Tibial artery (tissue), 4 donors: ENCODE measurements at regions of chr6 and their contacts with region 1.

Region 1: DNA sequence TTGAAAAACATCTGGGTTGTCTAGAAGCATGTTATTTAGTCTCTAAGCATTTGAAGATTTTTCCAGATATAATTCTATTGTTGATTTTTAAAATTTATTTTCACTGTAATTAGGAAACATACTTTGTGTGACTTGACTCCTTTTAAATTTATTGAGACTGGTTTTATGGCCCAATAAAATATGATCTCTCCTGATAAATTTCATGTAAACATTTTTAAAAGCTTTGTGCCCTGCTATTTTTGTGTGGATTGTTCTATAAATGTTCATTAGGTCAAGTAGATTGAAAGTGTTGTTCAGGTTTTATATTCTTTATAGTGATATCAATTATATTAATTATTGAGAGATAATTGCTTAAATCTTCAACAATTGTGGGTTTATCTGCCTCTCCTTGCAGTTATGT is 105.4 kb downstream of the RFX6 start:
- DNase-seq: no peak
- H3K4me3 ChIP-seq: no peak overlapping the region
- H3K27ac ChIP-seq: no peak overlapping the region
- H3K4me1 ChIP-seq: no peaks in the 10 kb centered on the region
- H3K27me3 ChIP-seq: no peaks in the 10 kb centered on the region
- CTCF ChIP-seq: no peak

Region 2: DNA sequence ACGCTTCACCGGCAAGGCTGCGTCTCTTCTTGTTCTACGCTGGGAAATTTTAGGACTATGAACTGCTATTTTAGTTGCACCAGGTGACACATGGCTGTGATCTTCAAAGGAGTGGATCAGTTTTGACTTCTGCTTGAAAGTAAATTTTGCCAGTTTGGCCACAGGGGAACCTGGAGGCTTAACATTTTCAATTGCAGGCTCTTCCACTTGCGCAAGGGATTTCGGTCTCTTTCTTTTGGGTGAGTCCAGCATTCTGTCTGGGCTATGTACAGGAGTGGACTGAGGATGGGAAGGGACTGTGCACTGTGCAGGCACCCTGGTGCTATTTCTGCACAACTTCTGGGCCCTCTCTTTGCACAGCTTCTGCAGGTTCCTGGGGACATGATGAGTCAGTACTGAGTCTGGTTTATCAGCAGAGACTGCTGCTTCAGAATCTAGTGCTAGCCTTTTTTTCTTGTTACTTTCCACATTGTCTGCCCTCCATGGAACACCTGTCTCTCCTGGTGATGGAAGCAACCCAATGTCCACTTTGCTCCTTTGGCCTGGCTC is 1833.0 kb after region 1 on chr6:
- intact Hi-C with region 1: loop called (anchors 5 kb)
- DNase-seq: no peak
- H3K4me3 ChIP-seq: no peak overlapping the region
- H3K27ac ChIP-seq: no peak overlapping the region
- H3K4me1 ChIP-seq: no peaks in the 10 kb centered on the region
- H3K27me3 ChIP-seq: no peaks in the 10 kb centered on the region
- CTCF ChIP-seq: no peak